ENCODE measurements at regions of chr13 and their contacts with region 1.

Region 1: DNA sequence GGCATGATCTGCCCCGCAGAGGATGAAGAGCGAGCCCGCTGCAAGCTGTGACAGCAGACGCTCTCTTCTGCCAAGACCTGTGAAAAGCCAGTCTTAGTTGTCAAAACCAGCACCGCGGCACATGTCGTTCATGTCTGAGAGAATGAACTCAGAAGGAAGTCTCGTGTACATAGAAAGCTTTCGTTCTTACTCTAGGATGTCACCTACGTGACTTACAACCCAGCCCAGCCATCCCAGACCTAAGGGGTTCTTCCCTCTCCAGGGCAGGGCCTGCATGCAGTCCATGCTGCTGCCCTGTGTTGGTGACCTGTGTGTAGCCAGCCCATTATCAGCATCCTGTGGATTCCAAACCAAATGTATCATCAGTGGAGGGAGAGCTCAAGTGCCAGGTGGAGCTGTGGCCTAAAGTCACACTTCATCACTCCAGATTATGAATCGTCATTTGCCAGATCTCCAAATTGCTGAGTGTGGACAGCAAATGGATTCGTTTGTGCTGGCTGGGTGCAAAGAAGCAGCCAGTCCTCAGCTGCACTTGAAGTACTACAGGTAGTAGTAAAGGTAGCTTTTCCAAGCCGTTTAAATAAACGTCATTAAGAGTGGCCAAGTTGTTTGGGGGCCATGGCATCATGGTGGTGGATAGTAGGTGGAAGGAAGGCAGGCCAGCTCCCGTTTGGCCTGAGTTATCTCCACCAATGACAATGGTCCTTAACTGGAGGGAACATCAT is 73.9 kb upstream of the GPR183 start:
- DNase-seq: peak; percentile 82
- ATAC-seq: peak; percentile 77
- H3K4me3 ChIP-seq: no peak overlapping the region
- H3K27ac ChIP-seq: peak overlapping the region; percentile 41
- H3K4me1 ChIP-seq: peaks cover 65% of the 10 kb centered on the region
- H3K27me3 ChIP-seq: no peaks in the 10 kb centered on the region
- CTCF ChIP-seq: no peak
- EP300 ChIP-seq: peak; percentile 58 to 59; a peak in 1 of 4 replicates
- POLR2A ChIP-seq: 0 out of 2 replicates have a peak, but pooled peaks have one; percentile 34
- RAD21 ChIP-seq: peak; percentile 31

Region 2: DNA sequence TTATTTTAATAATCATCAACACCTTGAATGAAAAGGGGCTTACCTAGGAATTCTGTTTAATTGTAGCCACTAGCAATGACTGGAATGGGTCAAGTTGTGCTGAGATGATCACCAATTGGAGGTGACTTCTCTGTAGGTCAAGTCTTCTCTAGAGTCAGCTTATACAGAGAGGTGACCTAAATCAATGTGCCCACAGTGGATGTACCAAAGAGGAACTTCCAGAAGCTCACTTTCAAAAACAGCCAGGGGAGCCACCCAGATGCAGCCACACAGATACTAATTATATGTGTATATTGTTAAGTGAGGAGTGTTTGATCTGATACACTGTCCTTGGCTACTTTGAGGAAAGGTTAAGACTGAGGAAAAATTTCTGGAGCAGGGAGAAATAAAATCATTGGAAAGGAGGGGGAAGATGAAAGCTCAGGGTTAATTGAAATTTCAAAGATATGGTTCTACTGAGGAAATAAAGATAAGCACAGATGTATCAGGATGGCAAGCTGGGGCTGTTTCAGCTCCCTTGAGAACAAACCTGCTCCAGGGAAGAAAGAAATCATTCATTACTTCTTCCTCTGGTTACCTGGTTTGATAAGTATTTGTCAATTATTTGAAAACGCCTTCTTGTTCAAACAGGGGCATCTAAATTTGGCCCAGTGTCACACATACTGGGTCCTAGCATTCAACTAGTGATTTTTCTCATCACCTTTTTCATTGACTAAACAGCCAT is 79.0 kb before region 1 on chr13:
- CTCF ChIA-PET with region 1: interaction called, 9 read pairs
- POLR2A ChIA-PET with region 1: interaction called, 5 read pairs
- RAD21 ChIA-PET with region 1: interaction called, 28 read pairs
- SMC1A ChIA-PET with region 1: interaction called, 21 read pairs
- in situ Hi-C with region 1: no loop called
- intact Hi-C with region 1: no loop called
- DNase-seq: no peak
- ATAC-seq: peak; percentile 39
- H3K4me3 ChIP-seq: peak overlapping the region; percentile 98
- H3K27ac ChIP-seq: peak overlapping the region; percentile 93
- H3K4me1 ChIP-seq: peaks cover 18% of the 10 kb centered on the region
- H3K27me3 ChIP-seq: no peaks in the 10 kb centered on the region
- CTCF ChIP-seq: no peak
- EP300 ChIP-seq: no peak
- POLR2A ChIP-seq: no peak
- RAD21 ChIP-seq: no peak

Region 3: DNA sequence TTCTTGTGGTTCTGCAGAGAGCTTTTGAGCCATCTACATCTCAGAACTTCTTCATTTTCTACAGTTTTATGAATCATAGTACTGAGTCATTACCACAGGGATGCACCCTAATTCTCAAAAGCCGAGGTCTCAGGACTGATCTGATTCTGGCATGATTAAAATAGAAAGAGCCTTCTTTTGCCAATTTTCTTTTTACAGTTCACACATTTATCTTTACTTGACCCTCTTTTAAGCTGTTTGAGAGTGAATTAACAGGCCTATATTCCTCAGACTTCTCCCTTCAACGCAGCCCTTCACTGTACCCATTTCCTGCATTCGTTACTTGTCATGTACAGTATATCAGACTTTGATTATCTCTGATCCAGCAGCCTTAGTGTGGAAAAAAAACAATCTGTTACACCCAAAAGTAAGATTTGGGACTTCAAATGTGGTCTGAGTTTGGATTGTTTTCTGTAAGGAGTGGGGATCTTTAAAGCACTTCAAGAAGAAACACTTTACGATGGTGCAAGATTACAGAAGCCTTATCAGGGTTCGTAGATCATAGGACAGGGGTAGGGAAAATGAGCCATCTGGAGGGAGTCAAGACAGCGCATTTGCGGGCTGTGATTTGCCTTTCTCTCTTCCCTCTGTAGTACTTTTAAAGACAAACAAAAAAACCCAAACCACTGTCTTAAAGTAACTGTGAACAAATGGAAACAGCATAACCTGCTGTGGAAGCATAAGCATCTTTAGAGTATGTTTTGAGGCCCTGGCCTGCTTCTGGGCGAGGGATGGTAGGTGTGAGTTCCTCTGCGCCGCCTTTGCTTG is 58.6 kb before region 1 on chr13:
- CTCF ChIA-PET with region 1: interaction called, 4 read pairs
- POLR2A ChIA-PET with region 1: interaction called, 4 read pairs
- RAD21 ChIA-PET with region 1: interaction called, 10 read pairs
- SMC1A ChIA-PET with region 1: interaction called, 14 read pairs
- in situ Hi-C with region 1: no loop called
- intact Hi-C with region 1: no loop called
- DNase-seq: peak; percentile 85
- ATAC-seq: peak; percentile 92
- H3K4me3 ChIP-seq: peak overlapping the region; percentile 49
- H3K27ac ChIP-seq: peak overlapping the region; percentile 85
- H3K4me1 ChIP-seq: peaks cover 53% of the 10 kb centered on the region
- H3K27me3 ChIP-seq: no peaks in the 10 kb centered on the region
- CTCF ChIP-seq: no peak
- EP300 ChIP-seq: peak; percentile 55 to 84; a peak in 2 of 4 replicates
- POLR2A ChIP-seq: no peak
- RAD21 ChIP-seq: peak; percentile 21; the same call in 1 of the 2 replicates

Region 4: DNA sequence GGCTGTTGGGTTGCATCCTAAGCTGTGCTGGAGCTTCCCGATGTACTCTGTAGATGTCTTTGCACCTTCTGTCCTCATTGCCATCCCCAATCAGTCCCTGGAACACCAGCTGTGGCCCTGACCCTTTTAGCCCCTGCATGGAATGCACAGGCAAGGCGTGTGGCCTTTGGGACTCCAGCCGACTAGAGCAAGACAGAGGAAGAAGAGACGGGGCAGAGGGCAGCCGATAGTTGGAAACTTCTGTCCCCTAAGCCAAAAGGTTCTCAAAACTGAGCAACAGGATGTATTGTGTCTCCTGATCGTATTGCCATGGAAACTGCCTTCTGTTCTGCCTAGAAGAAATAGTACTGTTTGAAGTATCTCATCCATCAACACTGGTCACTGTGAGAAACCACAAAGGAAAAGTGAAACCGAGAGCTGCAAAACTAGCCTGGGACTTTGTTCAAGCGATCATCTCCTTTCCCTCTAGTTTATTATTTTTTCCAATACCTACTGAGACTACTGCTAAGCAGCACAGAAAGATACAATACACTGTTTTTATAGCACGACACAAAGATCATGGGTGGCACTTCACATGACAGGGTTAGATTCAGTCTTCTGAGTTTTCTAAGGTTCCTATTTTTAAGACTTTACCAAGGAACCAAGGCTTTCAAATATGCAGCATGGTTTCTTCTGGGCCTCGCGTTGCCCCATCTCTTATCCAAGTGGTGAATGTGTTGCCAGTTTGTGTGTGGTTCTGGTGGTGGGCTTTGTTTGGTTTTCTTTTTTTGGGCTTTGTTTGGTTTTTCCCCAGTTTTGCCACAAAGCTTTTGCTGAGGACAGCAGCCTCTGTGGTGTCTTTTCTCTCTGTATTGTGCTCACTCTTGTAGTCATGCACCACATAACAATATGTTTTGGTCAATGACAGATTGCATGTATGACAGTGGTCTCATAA is 24.7 kb before region 1 on chr13:
- CTCF ChIA-PET with region 1: interaction called, 3 read pairs
- POLR2A ChIA-PET with region 1: interaction called, 14 read pairs
- RAD21 ChIA-PET with region 1: interaction called, 11 read pairs
- SMC1A ChIA-PET with region 1: interaction called, 12 read pairs
- in situ Hi-C with region 1: no loop called
- intact Hi-C with region 1: no loop called
- DNase-seq: peak; percentile 92
- ATAC-seq: peak; percentile 81
- H3K4me3 ChIP-seq: peak overlapping the region; percentile 41; the same call in 1 of the 2 replicates
- H3K27ac ChIP-seq: peak overlapping the region; percentile 81
- H3K4me1 ChIP-seq: peaks cover 65% of the 10 kb centered on the region
- H3K27me3 ChIP-seq: no peaks in the 10 kb centered on the region
- CTCF ChIP-seq: no peak
- EP300 ChIP-seq: peak; percentile 43 to 83; a peak in 3 of 4 replicates
- POLR2A ChIP-seq: no peak
- RAD21 ChIP-seq: no peak

Region 5: DNA sequence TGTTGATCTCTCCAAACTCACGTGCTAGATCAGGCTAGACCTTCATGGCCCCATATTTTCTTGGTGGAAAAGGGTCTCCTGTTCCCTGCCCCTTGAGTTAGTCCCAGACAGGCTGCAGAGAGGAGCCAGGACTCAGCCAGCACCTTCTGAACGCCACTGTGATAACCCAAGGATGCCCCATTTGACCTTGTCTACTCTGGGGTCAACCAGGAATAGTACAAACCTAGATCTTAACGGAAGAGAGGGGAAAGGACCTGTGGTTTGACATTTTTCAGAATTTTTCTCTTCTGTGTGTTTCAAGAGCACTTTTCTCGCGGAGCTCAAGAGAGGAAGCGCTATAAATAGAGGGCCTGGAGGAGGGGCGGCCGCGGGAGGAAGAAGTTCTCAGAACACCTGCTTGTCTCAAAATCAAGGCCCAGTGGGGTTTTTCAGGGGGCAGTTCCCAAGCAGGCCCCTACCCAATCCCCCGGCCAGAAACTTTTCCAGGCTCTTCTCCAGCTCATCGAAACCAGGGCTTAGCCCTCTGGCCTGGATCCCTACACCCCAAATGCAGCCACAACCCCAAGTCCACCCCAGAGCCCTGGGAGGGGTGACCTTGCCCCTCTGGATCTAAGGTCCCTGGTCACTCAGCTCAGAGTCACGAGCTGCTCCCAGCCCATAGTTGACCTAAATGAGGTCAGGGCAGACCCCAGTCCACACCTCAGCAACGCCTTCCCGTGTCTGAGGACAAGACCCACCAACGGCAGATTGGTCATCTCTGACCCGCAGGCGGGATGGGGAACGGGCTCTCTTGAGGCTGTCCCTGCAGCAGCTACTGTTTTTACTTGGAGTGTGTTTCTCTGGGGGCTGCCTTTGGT is 44.6 kb after region 1 on chr13:
- CTCF ChIA-PET with region 1: interaction called, 16 read pairs
- POLR2A ChIA-PET with region 1: interaction called, 8 read pairs
- RAD21 ChIA-PET with region 1: interaction called, 33 read pairs
- SMC1A ChIA-PET with region 1: interaction called, 51 read pairs
- in situ Hi-C with region 1: no loop called
- intact Hi-C with region 1: no loop called
- DNase-seq: peak; percentile 90
- ATAC-seq: peak; percentile 71
- H3K4me3 ChIP-seq: peak overlapping the region; percentile 10
- H3K27ac ChIP-seq: peak overlapping the region; percentile 100
- H3K4me1 ChIP-seq: peaks cover 62% of the 10 kb centered on the region
- H3K27me3 ChIP-seq: no peaks in the 10 kb centered on the region
- CTCF ChIP-seq: no peak
- EP300 ChIP-seq: peak; percentile 55 to 89; a peak in 3 of 4 replicates
- POLR2A ChIP-seq: no peak
- RAD21 ChIP-seq: peak; percentile 18; the same call in 1 of the 2 replicates

Measured in GM12878 (cell line).